Left ventricle myocardium inferior (tissue), 1 donor: ENCODE measurements at regions of chr17 and their contacts with region 1.

Region 1: DNA sequence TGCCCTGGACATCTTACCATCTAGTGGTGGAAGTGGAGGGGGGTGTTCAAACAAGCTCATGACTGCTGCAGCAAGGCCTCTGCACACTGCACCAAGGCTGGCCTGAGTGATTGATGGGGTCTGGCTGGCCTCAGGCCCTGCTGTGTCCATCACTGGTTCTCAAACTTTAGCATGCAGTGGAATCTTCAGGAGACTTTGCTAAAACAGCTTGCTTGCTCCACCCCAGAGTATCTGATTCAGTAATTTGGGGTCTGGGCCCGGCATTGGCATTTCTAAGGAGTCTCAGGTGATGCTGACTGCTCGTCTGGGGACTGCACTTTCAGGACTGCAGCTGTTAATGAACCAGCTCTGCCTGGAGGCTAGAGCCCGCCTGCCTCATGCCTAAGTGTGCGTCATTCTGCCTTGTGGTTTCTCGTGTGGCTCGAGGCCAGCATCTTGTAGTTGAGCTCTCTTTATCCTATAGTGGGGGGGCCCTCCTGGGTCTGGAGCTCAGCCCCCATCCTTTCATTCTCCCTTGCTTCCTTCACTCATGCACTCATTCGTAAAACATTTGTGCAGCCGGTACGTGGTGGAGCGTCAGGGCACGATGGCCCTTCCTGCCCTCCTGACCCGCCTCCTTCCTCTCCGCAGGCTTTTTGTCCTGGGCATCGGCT is 4.1 kb downstream of the MGAT5B start:
- DNase-seq: no peak
- H3K4me3 ChIP-seq: no peak overlapping the region
- H3K27ac ChIP-seq: no peak overlapping the region
- H3K4me1 ChIP-seq: peaks cover 23% of the 10 kb centered on the region
- H3K27me3 ChIP-seq: peaks cover 79% of the 10 kb centered on the region
- CTCF ChIP-seq: no peak

Region 2: GRCh38 chr17:77054936-77055335 is 182.6 kb after region 1 on chr17:
- intact Hi-C with region 1: loop called (anchors 5 kb)
- DNase-seq: no peak
- H3K4me3 ChIP-seq: no peak overlapping the region
- H3K27ac ChIP-seq: no peak overlapping the region
- H3K4me1 ChIP-seq: no peaks in the 10 kb centered on the region
- H3K27me3 ChIP-seq: peaks cover 100% of the 10 kb centered on the region
- CTCF ChIP-seq: no peak

Region 3: GRCh38 chr17:77266891-77267341 is 394.6 kb after region 1 on chr17:
- intact Hi-C with region 1: loop called (anchors 10 kb)
- DNase-seq: no peak
- H3K4me3 ChIP-seq: no peak overlapping the region
- H3K27ac ChIP-seq: no peak overlapping the region
- H3K4me1 ChIP-seq: no peaks in the 10 kb centered on the region
- H3K27me3 ChIP-seq: peaks cover 24% of the 10 kb centered on the region
- CTCF ChIP-seq: no peak